Right lobe of liver (tissue), 6 donors: ENCODE measurements at regions of chr2 and their contacts with region 1.

Region 1: GRCh38 chr2:238369591-238370040 is 49.3 kb downstream of the TRAF3IP1 start:
- DNase-seq: no peak
- ATAC-seq: peak in 2 of 4 donors; percentile 35 to 47
- H3K4me3 ChIP-seq: no peak overlapping the region
- H3K27ac ChIP-seq: no peak overlapping the region
- H3K4me1 ChIP-seq: peaks cover 0 to 4% (median 0%) of the 10 kb centered on the region in 4 donors
- H3K27me3 ChIP-seq: no peaks in the 10 kb centered on the region
- CTCF ChIP-seq: no peak
- POLR2A ChIP-seq: no peak

Region 2: GRCh38 chr2:238462782-238463396 is 93.3 kb after region 1 on chr2:
- intact Hi-C with region 1: loop called in 1 of 2 experiments (anchors 5 kb)
- DNase-seq: no peak
- ATAC-seq: peak; percentile 82 to 89 (median 86)
- H3K4me3 ChIP-seq: no peak overlapping the region
- H3K27ac ChIP-seq: no peak overlapping the region
- H3K4me1 ChIP-seq: no peaks in the 10 kb centered on the region
- H3K27me3 ChIP-seq: no peaks in the 10 kb centered on the region
- CTCF ChIP-seq: peak; percentile 75 to 90 (median 76)
- POLR2A ChIP-seq: no peak

Region 3: GRCh38 chr2:238784671-238785527 is 415.3 kb after region 1 on chr2:
- intact Hi-C with region 1: loop called in 1 of 2 experiments (anchors 10 kb)
- DNase-seq: peak; percentile 70 to 73 (median 73)
- ATAC-seq: peak; percentile 84 to 90 (median 88)
- H3K4me3 ChIP-seq: no peak overlapping the region
- H3K27ac ChIP-seq: no peak overlapping the region
- H3K4me1 ChIP-seq: no peaks in the 10 kb centered on the region
- H3K27me3 ChIP-seq: no peaks in the 10 kb centered on the region
- CTCF ChIP-seq: peak; percentile 75 to 91 (median 88)
- POLR2A ChIP-seq: no peak